ENCODE measurements at regions of chr4 and their contacts with region 1.

Region 1: DNA sequence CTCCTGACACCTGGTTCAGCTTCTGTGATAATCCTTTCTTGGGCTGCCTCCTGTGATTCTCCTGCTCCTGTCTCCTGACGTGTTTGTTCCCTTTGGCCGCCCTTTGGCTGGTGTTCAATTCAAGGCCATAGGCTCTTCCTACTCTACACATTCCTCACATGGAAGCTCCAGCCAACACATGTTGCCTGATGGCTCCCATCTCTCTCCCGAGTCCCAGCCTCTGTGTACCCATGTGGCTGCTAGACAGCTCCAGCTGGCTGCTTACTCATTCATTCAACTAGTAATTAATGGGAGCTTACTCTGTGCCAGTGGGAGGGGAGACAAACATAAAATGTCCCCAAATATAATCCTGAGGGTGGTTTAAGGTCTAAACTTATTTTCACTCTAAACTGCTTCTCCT is 9.2 kb upstream of the MED28 start:
- DNase-seq: no peak
- ATAC-seq: no peak
- H3K4me3 ChIP-seq: no peak overlapping the region
- H3K27ac ChIP-seq: no peak overlapping the region
- H3K4me1 ChIP-seq: no peaks in the 10 kb centered on the region
- H3K27me3 ChIP-seq: no peaks in the 10 kb centered on the region
- CTCF ChIP-seq: no peak

Region 2: GRCh38 chr4:17846266-17846665 is 241.0 kb after region 1 on chr4:
- CTCF ChIA-PET with region 1: interaction called, 15 read pairs
- POLR2A ChIA-PET with region 1: no interaction called
- in situ Hi-C with region 1: no loop called
- intact Hi-C with region 1: no loop called
- DNase-seq: no peak
- ATAC-seq: peak; percentile 38; the same call in 1 of the 2 replicates
- H3K4me3 ChIP-seq: no peak overlapping the region
- H3K27ac ChIP-seq: no peak overlapping the region
- H3K4me1 ChIP-seq: no peaks in the 10 kb centered on the region
- H3K27me3 ChIP-seq: no peaks in the 10 kb centered on the region
- CTCF ChIP-seq: no peak

Region 3: DNA sequence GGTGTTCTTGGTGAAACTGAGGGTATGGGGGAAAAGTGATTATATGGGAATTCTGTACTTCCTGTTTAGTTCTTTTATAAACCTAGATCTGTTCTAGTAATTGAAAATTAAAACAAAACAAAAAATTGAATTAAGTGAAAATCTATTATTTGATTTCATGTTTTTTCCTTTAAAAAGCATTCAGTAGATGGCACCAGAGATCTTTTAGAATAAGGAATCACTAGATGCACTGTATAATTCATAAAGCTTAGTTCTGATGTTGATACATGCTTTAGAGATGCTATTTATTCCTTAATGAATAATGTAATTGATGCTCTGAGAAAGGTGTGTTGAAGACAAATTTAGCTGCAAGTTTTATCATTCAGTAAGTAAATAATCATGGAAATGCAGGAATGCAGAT is 329.1 kb after region 1 on chr4:
- CTCF ChIA-PET with region 1: no interaction called
- POLR2A ChIA-PET with region 1: no interaction called
- in situ Hi-C with region 1: no loop called
- intact Hi-C with region 1: no loop called
- DNase-seq: no peak
- ATAC-seq: no peak
- H3K4me3 ChIP-seq: no peak overlapping the region
- H3K27ac ChIP-seq: no peak overlapping the region
- H3K4me1 ChIP-seq: no peaks in the 10 kb centered on the region
- H3K27me3 ChIP-seq: no peaks in the 10 kb centered on the region
- CTCF ChIP-seq: no peak

Measured in Panc1 (cell line).